MCF 10A (cell line): ENCODE measurements at regions of chr20 and their contacts with region 1.

Region 1: DNA sequence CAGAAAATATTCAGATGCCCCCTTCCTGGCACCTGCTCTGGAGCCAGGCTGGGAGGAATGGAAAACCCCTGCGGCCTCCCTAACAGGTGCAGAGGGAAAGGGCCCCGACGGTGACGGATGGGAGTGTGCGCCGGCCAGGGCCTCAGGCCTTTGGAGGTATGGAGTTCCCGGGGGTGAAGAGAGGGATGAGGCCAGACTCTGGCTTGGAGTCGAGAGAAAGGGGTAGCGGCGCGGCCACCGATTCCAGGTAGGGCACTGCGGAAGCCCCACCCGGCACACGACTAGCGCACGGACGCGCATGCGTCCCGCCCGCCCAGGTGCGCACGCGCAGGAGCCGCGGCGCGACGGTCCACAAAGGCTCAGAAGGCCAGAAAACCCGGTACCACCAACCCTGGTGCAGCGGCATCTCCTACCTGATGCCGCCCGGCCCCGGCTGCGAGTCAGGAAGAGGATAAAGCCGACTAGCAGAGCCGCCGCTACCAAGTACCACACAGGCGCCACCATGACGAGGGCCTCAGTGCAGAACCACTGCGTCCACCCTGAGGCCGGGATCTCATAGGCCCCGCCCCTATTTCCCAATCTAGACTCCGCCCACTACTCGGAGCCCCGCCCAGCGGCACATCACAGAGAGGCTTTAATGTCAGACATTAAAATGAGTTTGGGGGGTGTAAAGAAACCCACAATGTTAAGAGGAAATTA is at the start of gene DDRGK1:
- DNase-seq: peak; percentile 87
- H3K4me3 Mint-ChIP-seq: peak within 1 kb of the TSS; percentile 92
- H3K27ac Mint-ChIP-seq: peak within 1 kb of the TSS; percentile 98
- H3K4me1 Mint-ChIP-seq: no peaks in the 10 kb centered on the region
- H3K27me3 Mint-ChIP-seq: no peaks in the 10 kb centered on the region
- CTCF ChIP-seq: no peak
- total RNA-seq, gene DDRGK1: 116 and 136 TPM in 2 replicates

Region 2: DNA sequence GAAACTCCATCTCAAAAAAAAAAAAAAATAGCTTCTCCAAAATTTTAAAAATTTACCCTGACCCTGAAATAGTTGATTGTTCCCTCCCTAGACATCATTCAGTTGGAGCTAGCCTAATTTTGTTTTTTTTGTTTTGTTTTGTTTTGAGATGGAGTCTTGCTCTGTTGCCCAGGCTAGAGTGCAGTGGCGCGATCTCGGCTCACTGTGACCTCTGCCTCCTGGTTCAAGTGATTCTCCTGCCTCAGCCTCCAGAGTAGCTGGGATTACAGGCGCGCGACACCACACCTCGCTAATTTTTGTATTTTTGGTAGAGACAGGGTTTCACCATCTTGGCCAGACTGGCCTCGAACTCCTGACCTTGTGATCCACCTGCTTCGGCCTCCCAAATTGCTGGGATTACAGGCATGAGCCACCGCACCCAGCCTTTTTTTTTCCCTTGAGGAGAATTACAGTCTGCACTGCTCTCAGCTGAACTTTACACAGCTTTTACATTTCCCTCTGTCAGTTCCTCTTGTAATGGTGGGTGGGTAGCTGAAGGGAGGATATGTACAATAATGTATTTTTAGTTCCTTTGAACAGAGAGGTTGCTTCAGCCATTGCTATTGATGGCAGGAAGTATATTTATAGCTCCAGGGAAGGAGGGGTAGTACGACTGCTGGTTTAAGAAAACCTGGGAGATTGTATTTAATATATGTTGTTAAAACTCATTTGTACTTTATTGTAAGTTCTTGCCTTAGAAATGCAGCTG is 303.3 kb before region 1 on chr20:
- CTCF ChIA-PET with region 1: no interaction called
- POLR2A ChIA-PET with region 1: no interaction called
- intact Hi-C with region 1: no loop called
- DNase-seq: no peak
- H3K4me3 Mint-ChIP-seq: no peak overlapping the region
- H3K27ac Mint-ChIP-seq: no peak overlapping the region
- H3K4me1 Mint-ChIP-seq: peaks cover 5% of the 10 kb centered on the region
- H3K27me3 Mint-ChIP-seq: no peaks in the 10 kb centered on the region
- CTCF ChIP-seq: no peak

Region 3: DNA sequence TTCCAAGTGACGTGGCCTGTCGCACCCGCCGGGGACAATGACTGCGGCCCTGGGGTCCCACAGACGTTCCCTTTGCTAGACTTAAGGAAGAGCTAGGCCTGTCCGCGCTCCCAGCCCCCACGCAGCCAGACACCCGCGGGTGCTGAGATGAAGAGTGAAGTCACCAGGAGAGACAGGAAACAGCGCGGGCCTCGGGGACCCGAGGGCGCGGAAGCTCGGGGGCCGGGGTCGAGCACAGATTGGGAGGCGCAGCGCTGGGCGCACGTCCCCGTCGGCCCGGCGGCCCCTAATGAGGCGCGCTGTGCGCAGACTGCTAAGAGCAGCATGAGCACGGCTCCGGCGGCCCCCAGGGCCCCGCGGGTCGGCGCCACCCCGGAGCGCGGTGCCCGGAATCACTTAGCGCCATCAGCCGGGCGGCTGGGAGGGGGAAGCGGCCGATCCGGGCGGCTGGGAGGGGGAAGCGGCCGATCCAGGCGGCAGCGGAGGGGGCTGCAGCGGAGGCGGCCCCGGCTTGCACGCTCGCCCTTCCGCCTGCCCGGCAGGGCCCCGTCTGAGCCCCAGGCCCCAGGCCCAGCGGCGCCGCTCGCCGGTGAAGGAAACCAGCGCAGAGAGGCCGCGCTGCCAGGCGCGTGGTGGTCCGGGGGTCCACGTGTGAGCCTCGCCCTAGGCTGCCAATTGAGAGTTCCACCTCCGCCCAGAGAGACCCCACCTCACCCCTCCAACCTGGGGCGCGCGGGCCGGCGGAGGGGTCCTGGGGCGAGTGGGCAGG is 111.5 kb before region 1 on chr20:
- CTCF ChIA-PET with region 1: no interaction called
- POLR2A ChIA-PET with region 1: no interaction called
- intact Hi-C with region 1: no loop called
- DNase-seq: no peak
- H3K4me3 Mint-ChIP-seq: no peak overlapping the region
- H3K27ac Mint-ChIP-seq: no peak overlapping the region
- H3K4me1 Mint-ChIP-seq: no peaks in the 10 kb centered on the region
- H3K27me3 Mint-ChIP-seq: peaks cover 12% of the 10 kb centered on the region
- CTCF ChIP-seq: no peak

Region 4: DNA sequence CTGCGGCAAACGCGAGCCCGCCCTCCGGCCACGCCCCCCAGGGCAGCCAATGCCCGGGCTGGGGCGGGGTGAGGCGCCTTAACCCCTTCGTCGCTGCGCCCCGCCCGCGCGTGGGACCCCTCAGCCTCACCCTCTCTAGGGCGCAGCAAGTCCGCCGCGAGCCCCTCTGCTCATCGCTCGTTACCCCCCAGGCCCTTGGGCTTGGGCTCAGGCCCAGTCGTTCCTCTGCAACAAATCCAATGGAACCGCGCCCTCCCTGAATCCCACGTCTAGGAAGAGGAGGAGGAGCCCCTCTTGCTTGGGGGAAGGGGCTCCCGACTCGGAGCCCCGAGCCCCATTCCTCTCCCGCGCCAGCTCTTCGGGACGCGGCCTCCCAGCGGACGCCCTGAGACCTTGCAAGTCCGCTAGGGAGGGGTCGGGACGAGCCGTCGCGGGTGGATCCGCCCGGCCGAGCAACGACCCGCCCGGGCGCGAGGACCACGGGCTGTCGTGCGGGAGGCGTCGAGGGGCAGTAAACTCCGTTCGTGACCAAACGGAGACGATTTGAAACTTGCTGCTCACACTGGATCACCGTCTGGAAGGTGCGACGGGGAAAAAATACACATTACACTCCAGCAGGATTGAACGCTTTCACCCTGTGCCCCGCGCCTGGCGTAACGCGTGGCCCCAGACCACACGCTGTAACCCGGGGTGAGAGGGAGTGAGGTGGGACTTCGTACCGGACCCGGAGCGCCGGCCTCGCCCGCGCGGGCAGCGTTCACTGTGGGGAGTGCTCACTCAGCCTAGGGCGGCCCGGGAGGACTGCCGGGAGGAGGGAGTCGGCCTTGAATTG is 30.4 kb before region 1 on chr20:
- CTCF ChIA-PET with region 1: interaction called, 4 read pairs
- POLR2A ChIA-PET with region 1: interaction called, 17 read pairs
- intact Hi-C with region 1: no loop called
- DNase-seq: peak; percentile 83
- H3K4me3 Mint-ChIP-seq: peak overlapping the region; percentile 93
- H3K27ac Mint-ChIP-seq: peak overlapping the region; percentile 86
- H3K4me1 Mint-ChIP-seq: peaks cover 14% of the 10 kb centered on the region
- H3K27me3 Mint-ChIP-seq: no peaks in the 10 kb centered on the region
- CTCF ChIP-seq: peak; percentile 16

Region 5: DNA sequence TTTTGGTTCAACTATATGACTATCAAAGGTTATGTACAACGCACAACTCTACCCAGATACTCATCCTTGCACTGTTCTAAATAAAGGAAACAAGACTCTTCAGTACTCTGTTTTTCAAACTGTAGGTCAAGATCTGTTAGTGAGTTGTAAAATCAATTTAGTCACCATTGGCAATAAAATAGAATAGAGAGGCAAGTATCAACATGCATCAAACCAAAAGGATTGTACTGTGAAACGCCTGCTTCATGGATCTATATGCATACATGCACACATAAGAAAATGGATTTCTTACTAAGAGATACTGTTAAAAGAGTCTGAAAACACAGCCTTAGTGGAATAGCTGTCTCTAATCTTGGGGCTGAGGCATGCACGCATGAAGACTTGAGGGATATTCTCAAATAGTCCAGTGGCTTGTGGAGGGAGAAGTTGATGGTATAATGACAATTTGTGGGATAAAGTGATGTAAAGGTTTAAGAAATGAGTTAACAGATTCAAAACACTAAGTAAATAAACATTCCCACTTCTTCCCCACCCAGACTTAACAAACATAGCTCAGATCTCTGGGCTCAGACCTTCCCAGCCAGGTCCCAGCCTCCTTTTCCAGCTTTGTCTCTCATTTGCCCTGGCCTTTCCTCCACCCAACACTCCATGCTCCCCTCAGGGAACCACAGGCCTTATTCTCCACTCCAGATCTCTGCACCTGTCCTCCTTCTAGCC is 20.2 kb before region 1 on chr20:
- CTCF ChIA-PET with region 1: no interaction called
- POLR2A ChIA-PET with region 1: interaction called, 15 read pairs
- intact Hi-C with region 1: no loop called
- DNase-seq: no peak
- H3K4me3 Mint-ChIP-seq: no peak overlapping the region
- H3K27ac Mint-ChIP-seq: peak overlapping the region; percentile 14
- H3K4me1 Mint-ChIP-seq: peaks cover 10% of the 10 kb centered on the region
- H3K27me3 Mint-ChIP-seq: no peaks in the 10 kb centered on the region
- CTCF ChIP-seq: no peak